ENCODE measurements at regions of chr17 and their contacts with region 1.

Region 1: GRCh38 chr17:82655038-82655479 is 6.8 kb upstream of the WDR45B start:
- DNase-seq: no peak
- ATAC-seq: peak in 5 of 8 donors; percentile 16 to 72 (median 43)
- H3K4me3 ChIP-seq: no peak overlapping the region
- H3K27ac ChIP-seq: peak overlapping the region in 9 of 10 donors; percentile 47 to 83 (median 68)
- H3K4me1 ChIP-seq: peaks cover 0 to 21% (median 11%) of the 10 kb centered on the region in 9 donors
- H3K27me3 ChIP-seq: no peaks in the 10 kb centered on the region
- CTCF ChIP-seq: no peak

Region 2: DNA sequence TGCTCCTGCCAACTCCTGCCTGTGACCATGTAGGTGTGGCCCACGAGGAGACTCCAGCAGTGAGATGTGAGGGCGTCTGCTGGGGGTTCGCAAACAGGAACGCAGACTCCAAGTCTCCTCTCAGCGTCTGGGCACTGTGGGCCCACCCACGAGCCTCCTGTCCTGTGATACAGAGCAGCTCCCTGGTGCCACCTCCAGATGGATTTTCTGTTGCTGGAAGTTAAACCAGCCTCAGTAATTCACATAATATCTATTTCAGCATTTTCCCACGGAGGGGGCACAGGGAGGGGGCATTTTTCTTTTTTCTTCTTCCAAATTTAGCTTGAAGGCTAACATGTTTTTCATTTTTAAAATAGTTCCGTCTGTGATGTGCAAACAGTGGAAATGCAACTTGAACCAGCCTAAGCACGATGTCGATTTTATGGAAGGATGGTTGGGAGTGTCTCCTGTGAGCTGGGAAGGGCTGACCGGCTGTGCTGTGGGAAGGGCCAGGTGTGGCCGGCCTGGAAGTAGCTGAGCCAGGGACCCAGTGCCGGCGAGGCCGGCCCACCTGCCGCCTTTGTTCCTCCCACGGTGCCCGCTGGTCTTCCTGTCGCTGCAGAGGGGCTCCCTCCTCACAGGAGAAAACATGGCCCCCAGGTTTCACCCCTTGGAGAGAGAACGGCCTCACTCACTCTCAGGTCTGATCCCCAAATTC is 47.3 kb after region 1 on chr17:
- intact Hi-C with region 1: loop called in 2 of 10 experiments (anchors 10 kb)
- DNase-seq: no peak
- ATAC-seq: no peak
- H3K4me3 ChIP-seq: no peak overlapping the region
- H3K27ac ChIP-seq: no peak overlapping the region
- H3K4me1 ChIP-seq: peaks cover 1 to 13% (median 11%) of the 10 kb centered on the region in 9 donors
- H3K27me3 ChIP-seq: peaks cover 0 to 6% (median 0%) of the 10 kb centered on the region in 7 donors
- CTCF ChIP-seq: no peak

Region 3: DNA sequence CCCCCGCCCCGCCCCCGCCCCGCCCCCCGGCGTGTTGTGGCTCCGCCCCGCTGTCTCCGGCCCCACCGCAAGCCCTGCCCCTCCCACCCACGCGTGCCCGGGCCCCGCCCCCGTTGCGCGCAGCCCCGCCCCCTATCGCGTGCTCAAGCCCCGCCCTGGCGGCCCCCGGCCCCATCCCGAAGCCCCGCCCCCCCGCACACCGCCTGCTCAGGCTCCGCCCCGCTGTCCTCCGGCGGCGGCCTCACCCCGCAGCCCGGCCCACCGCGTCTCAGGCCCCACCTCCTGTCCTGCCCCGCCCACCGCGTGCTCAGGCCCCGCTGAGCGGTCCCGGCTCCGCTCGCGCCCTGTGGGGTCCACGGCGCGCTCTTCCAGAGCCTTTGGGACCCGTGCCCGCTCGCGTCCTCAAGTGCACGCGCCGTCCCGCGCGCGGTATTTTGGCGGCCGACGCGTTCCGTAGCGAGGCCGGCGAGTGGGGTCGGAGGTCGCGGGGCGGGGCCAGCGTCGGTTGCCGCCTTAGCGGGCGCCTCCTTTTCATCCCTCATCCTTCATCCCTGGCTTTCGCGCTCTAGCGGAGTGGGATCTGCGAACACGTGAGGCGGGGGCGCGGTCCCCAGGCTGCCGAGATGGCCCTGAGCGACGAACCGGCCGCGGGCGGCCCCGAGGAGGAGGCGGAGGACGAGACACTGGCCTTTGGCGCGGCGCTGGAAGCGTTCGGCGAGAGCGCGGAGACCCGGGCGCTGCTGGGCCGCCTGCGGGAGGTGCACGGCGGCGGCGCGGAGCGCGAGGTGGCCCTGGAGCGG is 96.7 kb after region 1 on chr17 and contains the start of gene TBCD:
- intact Hi-C with region 1: loop called in 2 of 10 experiments (anchors 10 kb)
- DNase-seq: peak; percentile 89 to 93
- ATAC-seq: peak; percentile 84 to 93 (median 91)
- H3K4me3 ChIP-seq: peak within 1 kb of the TSS; percentile 68 to 97 (median 92)
- H3K27ac ChIP-seq: peak within 1 kb of the TSS; percentile 23 to 91 (median 86)
- H3K4me1 ChIP-seq: peaks cover 3 to 25% (median 13%) of the 10 kb centered on the region in 9 donors
- H3K27me3 ChIP-seq: no peaks in the 10 kb centered on the region
- CTCF ChIP-seq: peak in 1 of 9 donors; percentile 9
- total RNA-seq, gene TBCD: 41.3 to 79.0 (median 49.6) TPM

Region 4: GRCh38 chr17:83174285-83175118 is 519.4 kb after region 1 on chr17:
- intact Hi-C with region 1: no loop called
- DNase-seq: no peak
- ATAC-seq: peak in 3 of 8 donors; percentile 13 to 65 (median 39)
- H3K4me3 ChIP-seq: no peak overlapping the region
- H3K27ac ChIP-seq: no peak overlapping the region
- H3K4me1 ChIP-seq: peaks cover 0 to 3% (median 0%) of the 10 kb centered on the region in 9 donors
- H3K27me3 ChIP-seq: peaks cover 0 to 11% (median 0%) of the 10 kb centered on the region in 7 donors
- CTCF ChIP-seq: no peak